ENCODE measurements at regions of chr12 and their contacts with region 1.

Region 1: DNA sequence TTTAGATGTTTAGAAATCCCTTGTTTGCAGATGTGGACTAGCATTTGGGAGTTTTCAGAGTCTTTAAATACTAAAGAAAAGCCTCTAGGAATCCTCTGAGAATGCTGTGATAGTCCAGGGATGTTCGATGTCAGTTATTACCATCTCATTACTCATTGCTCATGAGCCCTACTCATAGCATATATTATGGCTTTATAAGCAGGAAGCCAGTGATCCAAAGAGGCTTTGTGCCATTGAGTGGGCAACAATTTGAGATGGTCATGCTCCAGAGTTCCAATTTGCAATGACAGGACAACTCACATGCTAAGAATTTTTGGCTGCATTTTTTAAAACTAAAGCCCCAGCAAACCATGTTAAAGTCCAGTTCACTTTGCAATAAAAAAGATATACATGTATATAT is 163.0 kb downstream of the OTOGL start:
- DNase-seq: no peak
- ATAC-seq: no peak
- H3K4me3 ChIP-seq: no peak overlapping the region
- H3K27ac ChIP-seq: no peak overlapping the region
- H3K4me1 ChIP-seq: no peaks in the 10 kb centered on the region
- H3K27me3 ChIP-seq: no peaks in the 10 kb centered on the region; a peak in 1 of 4 replicates
- CTCF ChIP-seq: no peak
- EP300 ChIP-seq: no peak
- POLR2A ChIP-seq: no peak
- RAD21 ChIP-seq: no peak

Region 2: DNA sequence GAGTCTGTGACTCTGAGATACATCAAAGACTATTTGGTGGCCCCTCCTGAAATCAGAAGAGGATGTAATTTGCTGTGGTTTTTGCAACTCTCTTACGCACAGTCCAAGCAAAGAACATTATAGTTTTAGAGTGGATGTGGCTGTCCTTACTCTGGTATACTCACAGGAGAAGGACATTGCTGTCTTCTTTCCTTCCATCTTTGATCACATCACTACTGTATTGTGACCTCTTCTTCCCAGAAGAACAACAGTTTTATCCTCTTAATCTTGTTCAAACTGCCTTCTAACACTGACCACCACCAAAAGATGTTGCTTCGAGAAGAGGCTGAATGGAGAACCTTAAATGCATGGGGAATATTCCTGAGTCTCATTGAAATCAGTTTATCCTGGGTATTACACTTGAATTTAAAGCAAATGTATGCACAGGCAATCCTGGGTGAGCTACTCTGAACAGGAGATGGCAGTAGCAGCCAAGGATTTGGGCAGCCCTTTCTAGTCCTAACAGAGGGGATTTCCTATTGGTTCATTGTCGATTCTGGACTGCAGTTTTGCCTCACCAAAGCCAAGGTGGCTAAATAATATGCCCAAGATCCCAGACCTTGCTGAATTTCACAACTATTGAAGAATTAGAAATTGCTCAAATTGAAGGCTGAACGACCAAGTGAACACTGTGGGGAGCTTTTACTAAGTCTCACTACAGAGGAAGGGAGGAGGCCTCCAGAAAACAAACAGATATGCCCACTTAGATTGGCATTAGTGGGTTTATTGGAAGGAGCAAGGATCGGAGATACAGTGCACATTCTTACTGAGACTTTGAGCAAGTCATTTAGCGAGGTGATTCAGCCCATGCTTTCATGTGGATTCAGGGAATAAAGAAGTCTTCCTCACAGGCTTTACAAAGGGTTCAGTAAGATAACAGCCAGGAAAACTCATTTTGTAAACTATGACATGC is 854.4 kb before region 1 on chr12:
- CTCF ChIA-PET with region 1: interaction called, 3 read pairs
- POLR2A ChIA-PET with region 1: no interaction called
- RAD21 ChIA-PET with region 1: interaction called, 4 read pairs
- SMC1A ChIA-PET with region 1: no interaction called
- in situ Hi-C with region 1: no loop called
- intact Hi-C with region 1: loop called (anchors 2 kb)
- DNase-seq: peak; percentile 9
- ATAC-seq: peak; percentile 99
- H3K4me3 ChIP-seq: no peak overlapping the region
- H3K27ac ChIP-seq: no peak overlapping the region
- H3K4me1 ChIP-seq: no peaks in the 10 kb centered on the region
- H3K27me3 ChIP-seq: no peaks in the 10 kb centered on the region
- CTCF ChIP-seq: peak; percentile 54 to 81 (median 55); a peak in 5 of 6 replicates
- EP300 ChIP-seq: no peak
- POLR2A ChIP-seq: no peak
- RAD21 ChIP-seq: peak; percentile 79

Region 3: GRCh38 chr12:80205960-80206359 is 56.4 kb before region 1 on chr12:
- CTCF ChIA-PET with region 1: no interaction called
- POLR2A ChIA-PET with region 1: no interaction called
- RAD21 ChIA-PET with region 1: no interaction called
- SMC1A ChIA-PET with region 1: interaction called, 3 read pairs
- in situ Hi-C with region 1: no loop called
- intact Hi-C with region 1: loop called (anchors 5 kb)
- DNase-seq: no peak
- ATAC-seq: no peak
- H3K4me3 ChIP-seq: no peak overlapping the region
- H3K27ac ChIP-seq: no peak overlapping the region
- H3K4me1 ChIP-seq: no peaks in the 10 kb centered on the region
- H3K27me3 ChIP-seq: peaks cover 0 to 2% of the 10 kb centered on the region in 2 experiments; a peak in 2 of 4 replicates
- CTCF ChIP-seq: no peak
- EP300 ChIP-seq: no peak
- POLR2A ChIP-seq: no peak
- RAD21 ChIP-seq: no peak

Measured in GM12878 (cell line).